CD8-positive, alpha-beta T cell (primary cell): ENCODE measurements at regions of chrX and their contacts with region 1.

Region 1: DNA sequence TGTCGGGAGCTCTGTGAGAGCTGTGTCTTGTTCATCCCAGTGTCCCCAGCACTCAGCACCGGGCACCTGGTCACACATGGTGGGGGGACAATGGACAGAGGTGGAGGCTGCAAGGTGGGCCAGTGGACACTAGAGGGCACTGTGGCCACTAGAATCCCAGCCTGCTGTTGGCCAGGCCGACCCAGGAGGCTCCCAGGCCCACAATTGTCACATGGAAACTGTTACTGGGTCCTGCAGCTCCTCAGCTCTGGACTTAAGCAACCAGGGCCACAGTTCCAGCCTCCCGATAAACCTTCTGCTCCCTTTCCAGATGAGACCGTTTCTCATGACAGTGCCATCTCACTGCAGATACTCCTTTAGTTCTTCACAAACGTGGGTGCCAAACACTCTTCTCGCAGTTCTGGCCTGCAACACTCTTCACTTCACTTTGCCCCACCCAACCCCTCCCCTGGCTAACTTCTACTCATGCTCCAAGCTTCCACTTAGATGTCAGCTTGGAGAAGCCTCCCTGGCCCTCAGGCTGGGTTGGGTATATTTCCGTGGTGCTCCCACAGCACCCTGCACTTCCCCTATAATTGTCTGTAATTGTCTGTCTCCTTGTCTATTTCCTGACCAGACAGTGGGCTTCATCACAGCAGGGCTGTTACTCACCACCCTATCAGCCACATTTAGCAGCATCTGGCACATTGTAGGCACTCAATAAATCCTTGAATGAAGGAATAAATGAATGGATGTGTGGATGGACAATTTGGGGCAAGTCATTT is 3.5 kb upstream of the IQSEC2 start:
- DNase-seq: peak; percentile 6 to 74 (median 42)
- ATAC-seq: peak; percentile 68
- H3K4me3 ChIP-seq: no peak overlapping the region
- H3K4me3 Mint-ChIP-seq: no peak overlapping the region
- H3K27ac ChIP-seq: no peak overlapping the region
- H3K27ac Mint-ChIP-seq: no peak overlapping the region
- H3K4me1 ChIP-seq: peaks cover 23% of the 10 kb centered on the region
- H3K4me1 Mint-ChIP-seq: peaks cover 41% of the 10 kb centered on the region
- H3K27me3 ChIP-seq: no peaks in the 10 kb centered on the region
- H3K27me3 Mint-ChIP-seq: peaks cover 2% of the 10 kb centered on the region
- CTCF ChIP-seq: peak; percentile 63

Region 2: GRCh38 chrX:53272808-53273337 is 12.0 kb before region 1 on chrX:
- CTCF ChIA-PET with region 1: interaction called, 14 read pairs
- POLR2A ChIA-PET with region 1: no interaction called
- intact Hi-C with region 1: no loop called
- DNase-seq: no peak
- ATAC-seq: no peak
- H3K4me3 ChIP-seq: no peak overlapping the region
- H3K4me3 Mint-ChIP-seq: no peak overlapping the region
- H3K27ac ChIP-seq: no peak overlapping the region
- H3K27ac Mint-ChIP-seq: no peak overlapping the region
- H3K4me1 ChIP-seq: no peaks in the 10 kb centered on the region
- H3K4me1 Mint-ChIP-seq: no peaks in the 10 kb centered on the region
- H3K27me3 ChIP-seq: no peaks in the 10 kb centered on the region
- H3K27me3 Mint-ChIP-seq: no peaks in the 10 kb centered on the region
- CTCF ChIP-seq: no peak

Region 3: DNA sequence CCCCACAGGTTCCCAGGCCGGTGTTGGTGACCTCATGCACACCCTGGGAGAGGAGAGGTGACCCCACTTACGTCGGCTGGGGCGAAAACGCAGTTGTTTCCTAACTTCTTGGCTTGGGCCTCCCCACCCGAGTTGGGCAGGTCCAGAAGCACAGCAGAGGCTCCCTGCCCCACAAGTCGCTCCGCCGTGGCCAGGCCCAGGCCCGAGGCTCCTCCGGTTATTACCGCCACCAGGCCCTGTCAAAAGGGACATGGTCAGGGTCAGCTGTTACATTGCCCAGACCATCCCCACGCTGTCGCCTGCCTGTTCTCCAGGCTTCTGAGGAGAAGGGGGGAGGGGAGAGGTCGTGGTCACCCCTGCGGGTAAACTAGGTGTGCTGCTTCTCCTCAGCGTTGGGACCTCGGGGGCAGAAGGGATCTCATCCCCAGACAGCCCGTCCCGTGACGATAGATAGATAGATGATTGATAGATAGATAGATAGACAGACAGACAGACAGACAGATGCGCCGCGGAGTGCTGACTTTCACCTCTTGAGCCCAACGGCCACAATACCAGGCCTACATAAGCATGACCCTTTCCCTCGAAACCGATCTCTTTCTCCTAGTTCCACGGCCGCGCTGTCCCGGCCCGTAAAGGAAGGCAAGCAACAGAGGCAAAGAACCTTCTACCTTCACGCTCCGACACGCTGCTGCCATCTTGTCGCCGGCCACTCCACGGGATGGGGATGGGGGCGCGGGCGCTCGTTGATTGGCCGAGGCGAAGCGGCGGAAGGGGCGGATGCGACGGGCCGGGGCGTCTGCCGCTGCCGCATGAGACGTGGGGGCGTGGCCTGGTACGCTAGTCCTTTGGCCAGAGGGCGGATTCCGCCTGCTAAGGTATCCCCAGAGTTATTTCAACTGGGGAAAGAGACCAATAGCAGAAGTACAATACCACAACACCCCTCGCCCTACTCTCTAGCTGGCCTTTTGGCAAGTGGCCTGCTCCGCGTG is 149.1 kb after region 1 on chrX and contains the start of gene HSD17B10:
- CTCF ChIA-PET with region 1: interaction called, 14 read pairs
- POLR2A ChIA-PET with region 1: no interaction called
- intact Hi-C with region 1: loop called in 1 of 2 experiments (anchors 1 kb)
- DNase-seq: peak; percentile 59 to 91 (median 84)
- ATAC-seq: peak; percentile 97
- H3K4me3 ChIP-seq: peak within 1 kb of the TSS; percentile 55 to 74
- H3K4me3 Mint-ChIP-seq: peak within 1 kb of the TSS; percentile 97
- H3K27ac ChIP-seq: peak within 1 kb of the TSS; percentile 71 to 81
- H3K27ac Mint-ChIP-seq: peak within 1 kb of the TSS; percentile 97
- H3K4me1 ChIP-seq: peaks cover 10% of the 10 kb centered on the region
- H3K4me1 Mint-ChIP-seq: peaks cover 16% of the 10 kb centered on the region
- H3K27me3 ChIP-seq: no peaks in the 10 kb centered on the region
- H3K27me3 Mint-ChIP-seq: no peaks in the 10 kb centered on the region
- CTCF ChIP-seq: no peak
- total RNA-seq, gene HSD17B10: 23.4 to 26.2 TPM

Region 4: GRCh38 chrX:53481816-53482465 is 197.1 kb after region 1 on chrX:
- CTCF ChIA-PET with region 1: interaction called, 15 read pairs
- POLR2A ChIA-PET with region 1: no interaction called
- intact Hi-C with region 1: no loop called
- DNase-seq: peak; percentile 6 to 66 (median 42)
- ATAC-seq: peak; percentile 52
- H3K4me3 ChIP-seq: no peak overlapping the region
- H3K4me3 Mint-ChIP-seq: no peak overlapping the region
- H3K27ac ChIP-seq: no peak overlapping the region
- H3K27ac Mint-ChIP-seq: no peak overlapping the region
- H3K4me1 ChIP-seq: peaks cover 3% of the 10 kb centered on the region
- H3K4me1 Mint-ChIP-seq: no peaks in the 10 kb centered on the region
- H3K27me3 ChIP-seq: no peaks in the 10 kb centered on the region
- H3K27me3 Mint-ChIP-seq: peaks cover 3% of the 10 kb centered on the region
- CTCF ChIP-seq: peak; percentile 54